ENCODE measurements at regions of chr19 and their contacts with region 1.

Region 1: GRCh38 chr19:41499899-41500298 is 56.9 kb downstream of the ERICH4 start:
- DNase-seq: no peak
- H3K4me3 ChIP-seq: no peak overlapping the region
- H3K27ac ChIP-seq: no peak overlapping the region
- H3K4me1 ChIP-seq: no peaks in the 10 kb centered on the region
- H3K27me3 ChIP-seq: no peaks in the 10 kb centered on the region
- CTCF ChIP-seq: no peak

Region 2: GRCh38 chr19:41531438-41532311 is 31.8 kb after region 1 on chr19:
- CTCF ChIA-PET with region 1: no interaction called
- dilution Hi-C with region 1: loop called (anchors 5 kb)
- in situ Hi-C with region 1: no loop called
- intact Hi-C with region 1: no loop called
- DNase-seq: peak; percentile 40
- H3K4me3 ChIP-seq: no peak overlapping the region
- H3K27ac ChIP-seq: no peak overlapping the region
- H3K4me1 ChIP-seq: peaks cover 15% of the 10 kb centered on the region
- H3K27me3 ChIP-seq: no peaks in the 10 kb centered on the region
- CTCF ChIP-seq: no peak